ENCODE measurements at regions of chr3 and their contacts with region 1.

Region 1: GRCh38 chr3:65785065-65785645 is 253.6 kb downstream of the MAGI1 start:
- DNase-seq: no peak
- ATAC-seq: peak; percentile 46

Region 2: GRCh38 chr3:66047311-66048050 is 262.3 kb after region 1 on chr3:
- intact Hi-C with region 1: loop called in 1 of 2 experiments (anchors 10 kb)
- DNase-seq: no peak
- ATAC-seq: peak; percentile 95

Region 3: DNA sequence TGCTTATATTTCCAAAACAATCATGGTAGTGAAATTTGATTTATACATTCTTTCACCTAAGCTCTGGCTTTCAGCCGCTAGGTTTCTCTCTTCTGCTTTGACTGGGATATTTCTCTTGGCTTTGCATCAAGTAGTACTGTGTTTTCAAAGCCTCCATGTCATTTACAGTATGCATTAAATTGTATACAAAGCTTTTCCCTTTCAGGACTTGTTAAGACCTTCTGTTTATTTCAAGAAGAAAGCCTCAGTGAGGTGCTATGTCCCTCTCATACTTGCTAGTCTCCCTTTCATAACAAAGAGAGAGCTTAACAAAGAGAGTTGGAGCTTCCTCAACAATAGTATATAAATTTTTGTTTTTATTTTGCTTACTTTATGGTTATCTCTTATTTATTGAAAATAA is 351.4 kb after region 1 on chr3:
- intact Hi-C with region 1: loop called in 1 of 2 experiments (anchors 2 kb)
- DNase-seq: no peak
- ATAC-seq: no peak

Region 4: DNA sequence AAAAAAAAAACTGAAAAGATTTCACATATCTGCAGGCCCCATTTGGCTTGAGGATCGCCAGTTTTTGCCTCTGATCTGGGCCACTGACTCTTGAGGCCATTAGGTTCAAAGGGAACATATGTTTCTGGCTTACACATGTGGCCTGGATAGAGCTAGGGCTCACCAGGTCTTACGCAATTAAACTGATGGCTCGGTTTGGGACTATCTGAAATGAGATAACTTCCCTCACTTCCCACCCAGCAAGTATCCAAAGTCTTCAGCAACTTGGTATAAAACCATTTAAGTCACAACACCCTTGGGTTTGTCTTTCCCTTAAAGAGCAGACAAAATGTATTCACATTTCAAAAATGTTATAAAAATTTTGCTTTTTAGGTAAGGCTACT is 679.3 kb after region 1 on chr3:
- intact Hi-C with region 1: no loop called
- DNase-seq: no peak
- ATAC-seq: no peak